ENCODE measurements at regions of chrX and their contacts with region 1.

Region 1: GRCh38 chrX:119067023-119067739 is 5.6 kb upstream of the CT47C1 start:
- DNase-seq: peak in 4 of 5 donors; percentile 41 to 73 (median 52)
- H3K4me3 ChIP-seq: no peak overlapping the region
- H3K27ac ChIP-seq: no peak overlapping the region
- H3K4me1 ChIP-seq: no peaks in the 10 kb centered on the region
- H3K27me3 ChIP-seq: no peaks in the 10 kb centered on the region
- CTCF ChIP-seq: peak; percentile 74

Region 2: DNA sequence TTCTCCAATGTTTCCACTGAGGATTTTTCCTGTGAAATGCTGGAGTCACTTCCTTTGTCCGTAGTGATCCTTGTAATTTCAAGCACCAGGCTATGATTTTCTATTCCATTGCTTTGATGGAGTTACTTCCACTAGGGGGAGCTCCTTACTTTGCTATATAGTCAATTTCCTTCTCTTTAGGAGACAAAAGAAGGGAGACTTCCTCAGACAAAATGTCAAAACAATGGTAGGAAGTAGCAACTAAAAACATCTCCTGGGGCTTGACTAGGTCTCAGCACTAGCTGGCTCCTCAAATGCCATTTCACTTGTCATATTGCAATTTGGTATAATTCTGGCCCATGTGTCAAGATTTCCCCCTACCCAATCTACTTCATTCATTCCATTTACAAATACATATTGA is 219.5 kb before region 1 on chrX:
- intact Hi-C with region 1: loop called (anchors 5 kb)
- DNase-seq: peak in 2 of 5 donors; percentile 71 to 79
- H3K4me3 ChIP-seq: no peak overlapping the region
- H3K27ac ChIP-seq: no peak overlapping the region
- H3K4me1 ChIP-seq: no peaks in the 10 kb centered on the region
- H3K27me3 ChIP-seq: no peaks in the 10 kb centered on the region
- CTCF ChIP-seq: peak; percentile 46

Region 3: DNA sequence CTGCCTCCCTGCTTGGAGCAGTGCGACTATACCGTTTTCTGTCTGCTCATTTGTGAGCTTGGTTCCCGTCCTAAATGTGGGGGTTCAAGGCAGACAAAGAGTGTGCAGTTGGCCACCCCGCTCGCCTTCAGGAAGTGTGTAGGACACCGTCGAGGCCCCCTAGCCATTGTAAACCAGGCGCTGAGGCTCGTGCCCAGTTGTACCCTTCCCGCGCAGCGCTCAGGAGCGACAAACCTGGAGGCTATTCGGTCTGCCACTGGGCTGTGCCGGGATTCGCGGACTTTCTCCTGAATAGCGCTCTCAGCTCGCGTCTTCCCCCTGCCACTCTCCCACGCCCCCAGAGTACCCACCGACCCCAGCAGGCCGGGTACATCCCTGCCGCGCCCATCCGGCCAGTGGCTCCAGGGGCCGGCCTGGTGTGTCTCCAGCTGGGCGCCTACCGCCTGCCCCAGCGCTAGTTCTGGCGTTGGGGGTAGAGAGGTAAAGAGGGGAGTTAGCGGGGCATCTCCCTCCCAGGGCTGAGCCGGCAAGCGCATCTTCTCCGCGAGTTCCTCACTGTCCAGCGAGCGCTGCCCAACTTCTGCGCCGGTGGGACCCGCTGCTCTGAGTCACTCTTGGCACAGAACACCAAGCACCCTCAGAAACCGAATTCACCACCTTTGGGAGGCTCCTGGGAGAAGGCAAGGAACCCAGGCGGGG is 93.6 kb before region 1 on chrX:
- intact Hi-C with region 1: no loop called
- DNase-seq: peak; percentile 6 to 73 (median 19)
- H3K4me3 ChIP-seq: peak overlapping the region in 2 of 3 donors; percentile 38 to 66
- H3K27ac ChIP-seq: no peak overlapping the region
- H3K4me1 ChIP-seq: peaks cover 0 to 2% (median 0%) of the 10 kb centered on the region in 3 donors
- H3K27me3 ChIP-seq: peaks cover 14% of the 10 kb centered on the region
- CTCF ChIP-seq: no peak

Region 4: GRCh38 chrX:120015145-120016067 is 948.2 kb after region 1 on chrX:
- intact Hi-C with region 1: no loop called
- DNase-seq: peak in 1 of 5 donors; percentile 17
- H3K4me3 ChIP-seq: peak overlapping the region in 1 of 3 donors; percentile 13
- H3K27ac ChIP-seq: no peak overlapping the region
- H3K4me1 ChIP-seq: peaks cover 0 to 2% (median 0%) of the 10 kb centered on the region in 3 donors
- H3K27me3 ChIP-seq: peaks cover 28% of the 10 kb centered on the region
- CTCF ChIP-seq: no peak